ENCODE measurements at regions of chr10 and their contacts with region 1.

Region 1: GRCh38 chr10:75401569-75402485 is at the start of gene ZNF503:
- H3K4me3 Mint-ChIP-seq: peak within 1 kb of the TSS; percentile 83
- H3K27ac Mint-ChIP-seq: peak within 1 kb of the TSS; percentile 91
- H3K4me1 Mint-ChIP-seq: peaks cover 52% of the 10 kb centered on the region
- H3K27me3 Mint-ChIP-seq: peaks cover 63% of the 10 kb centered on the region

Region 2: DNA sequence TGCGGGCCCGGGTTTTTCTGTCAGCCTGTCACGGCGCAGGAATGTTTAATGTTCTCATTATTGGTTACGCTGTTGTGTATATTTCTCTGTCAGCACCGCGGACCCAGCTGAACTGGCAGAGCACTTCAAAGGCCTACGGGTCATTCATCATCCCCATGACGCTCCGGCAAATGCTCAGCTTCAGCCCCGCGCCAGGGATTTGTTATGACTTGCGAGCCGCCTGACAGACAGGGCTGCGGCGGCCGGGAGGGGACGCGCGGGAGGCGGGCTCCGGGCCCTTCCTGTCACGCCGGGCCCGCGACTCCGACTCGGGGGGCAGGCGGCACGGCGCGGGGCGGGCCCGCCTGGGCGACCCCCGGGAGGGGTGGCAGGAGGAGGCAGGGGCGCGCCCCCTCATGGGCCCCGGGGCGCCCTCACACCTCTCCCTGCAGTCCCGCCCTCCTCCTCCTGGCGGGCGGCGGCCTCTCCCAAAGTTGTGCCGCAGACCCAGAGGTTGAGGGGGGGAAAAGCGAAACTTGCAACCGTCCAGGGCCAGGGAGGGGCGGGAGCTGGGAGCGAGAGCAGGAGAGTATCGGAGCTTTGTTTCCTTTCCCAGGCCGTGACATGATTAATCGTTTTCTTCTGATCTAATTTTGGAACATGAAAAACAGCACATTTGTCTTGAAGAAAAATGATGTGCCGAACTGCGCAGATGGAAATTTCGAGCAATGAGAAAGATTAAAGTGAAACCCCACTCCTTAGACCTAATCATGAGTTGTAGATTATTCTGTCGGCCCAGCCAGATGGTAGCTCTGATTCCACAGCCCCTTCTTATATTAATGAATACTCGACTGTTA is 106.7 kb before region 1 on chr10:
- intact Hi-C with region 1: loop called (anchors 10 kb)
- H3K4me3 Mint-ChIP-seq: no peak overlapping the region
- H3K27ac Mint-ChIP-seq: no peak overlapping the region
- H3K4me1 Mint-ChIP-seq: peaks cover 7% of the 10 kb centered on the region
- H3K27me3 Mint-ChIP-seq: peaks cover 27% of the 10 kb centered on the region

Region 3: GRCh38 chr10:75528392-75528791 is 126.6 kb after region 1 on chr10:
- intact Hi-C with region 1: loop called (anchors 10 kb)
- H3K4me3 Mint-ChIP-seq: no peak overlapping the region
- H3K27ac Mint-ChIP-seq: peak overlapping the region; percentile 56
- H3K4me1 Mint-ChIP-seq: peaks cover 63% of the 10 kb centered on the region
- H3K27me3 Mint-ChIP-seq: no peaks in the 10 kb centered on the region

Region 4: GRCh38 chr10:75910032-75910431 is 508.2 kb after region 1 on chr10:
- intact Hi-C with region 1: loop called (anchors 1 kb)
- H3K4me3 Mint-ChIP-seq: no peak overlapping the region
- H3K27ac Mint-ChIP-seq: no peak overlapping the region
- H3K4me1 Mint-ChIP-seq: no peaks in the 10 kb centered on the region
- H3K27me3 Mint-ChIP-seq: no peaks in the 10 kb centered on the region

Region 5: DNA sequence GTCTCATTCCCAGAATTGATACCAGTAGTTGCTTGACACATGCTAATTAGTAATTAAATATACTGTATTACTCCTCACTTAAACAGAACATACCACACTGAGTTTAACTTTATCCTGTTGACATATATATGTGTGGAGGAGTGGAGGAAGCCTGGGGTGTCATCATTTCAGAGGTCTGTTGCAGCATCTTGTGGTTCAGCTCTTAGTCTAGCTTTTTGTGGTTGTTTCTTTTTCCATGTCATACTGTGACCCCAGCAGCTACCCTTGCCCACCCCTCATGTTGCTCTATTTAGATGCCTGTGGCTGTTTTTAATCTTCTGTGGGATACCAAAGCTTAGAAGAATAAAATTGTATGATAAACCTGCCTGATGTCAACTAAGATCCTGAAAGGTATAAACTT is 905.0 kb after region 1 on chr10:
- intact Hi-C with region 1: loop called (anchors 5 kb)
- H3K4me3 Mint-ChIP-seq: no peak overlapping the region
- H3K27ac Mint-ChIP-seq: peak overlapping the region; percentile 22
- H3K4me1 Mint-ChIP-seq: peaks cover 63% of the 10 kb centered on the region
- H3K27me3 Mint-ChIP-seq: no peaks in the 10 kb centered on the region